Activated CD4-positive, alpha-beta memory T cell treated with anti-CD3 and anti-CD28 coated beads for 36 hours (primary cell): ENCODE measurements at regions of chr1 and their contacts with region 1.

Region 1: GRCh38 chr1:160376525-160377131 is 9.8 kb downstream of the NHLH1 start:
- DNase-seq: peak; percentile 33
- H3K4me3 Mint-ChIP-seq: no peak overlapping the region
- H3K27ac Mint-ChIP-seq: no peak overlapping the region
- H3K4me1 Mint-ChIP-seq: peaks cover 11% of the 10 kb centered on the region
- H3K27me3 Mint-ChIP-seq: no peaks in the 10 kb centered on the region

Region 2: GRCh38 chr1:160354388-160354985 is 22.1 kb before region 1 on chr1:
- CTCF ChIA-PET with region 1: interaction called, 111 read pairs
- POLR2A ChIA-PET with region 1: no interaction called
- intact Hi-C with region 1: no loop called
- DNase-seq: no peak
- H3K4me3 Mint-ChIP-seq: no peak overlapping the region
- H3K27ac Mint-ChIP-seq: no peak overlapping the region
- H3K4me1 Mint-ChIP-seq: no peaks in the 10 kb centered on the region
- H3K27me3 Mint-ChIP-seq: no peaks in the 10 kb centered on the region